Mammary epithelial cell (primary cell): ENCODE measurements at regions of chr11 and their contacts with region 1.

Region 1: DNA sequence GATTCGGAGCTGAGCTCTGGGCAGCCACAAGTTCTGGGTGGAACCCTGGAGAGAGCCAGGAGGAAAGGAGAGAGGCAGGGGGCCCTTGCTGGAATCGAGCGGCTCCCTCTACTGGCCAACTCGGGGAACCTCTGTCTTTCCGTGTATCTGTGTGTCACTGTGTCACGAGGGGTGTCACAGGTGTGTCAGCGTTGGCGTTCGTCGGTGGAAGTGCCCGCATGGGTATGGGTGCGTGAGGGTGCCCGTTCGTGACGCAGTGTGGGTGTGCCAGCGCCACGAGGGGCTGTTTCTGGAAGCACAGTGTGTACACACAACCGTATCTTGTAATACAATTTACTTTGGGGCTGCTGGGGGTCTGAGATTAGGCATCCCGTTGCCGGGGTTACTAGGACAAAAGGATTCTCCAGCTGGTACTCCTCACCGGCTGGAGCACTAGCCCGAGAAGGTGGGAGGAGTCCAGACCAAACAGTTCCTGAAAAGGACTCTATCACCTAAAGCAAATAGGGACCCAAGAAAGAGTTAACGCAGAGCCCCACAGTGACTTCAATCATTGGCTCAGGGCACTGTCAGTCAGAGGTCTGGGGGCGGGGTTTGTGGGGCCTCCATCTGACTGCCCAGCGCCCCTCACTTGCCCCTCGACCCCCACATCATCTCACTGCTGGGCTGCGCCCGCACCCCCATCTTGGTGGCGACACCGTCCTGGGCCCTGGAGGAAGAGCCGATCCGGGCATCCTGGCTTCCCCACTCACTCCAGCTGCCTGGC is 2.6 kb upstream of the BCL9L start:
- DNase-seq: peak; percentile 92
- H3K4me3 ChIP-seq: peak overlapping the region; percentile 77 to 85 (median 79)
- H3K27ac ChIP-seq: peak overlapping the region; percentile 84
- H3K4me1 ChIP-seq: peaks cover 44% of the 10 kb centered on the region
- H3K27me3 ChIP-seq: no peaks in the 10 kb centered on the region
- CTCF ChIP-seq: peak; percentile 94 to 95

Region 2: DNA sequence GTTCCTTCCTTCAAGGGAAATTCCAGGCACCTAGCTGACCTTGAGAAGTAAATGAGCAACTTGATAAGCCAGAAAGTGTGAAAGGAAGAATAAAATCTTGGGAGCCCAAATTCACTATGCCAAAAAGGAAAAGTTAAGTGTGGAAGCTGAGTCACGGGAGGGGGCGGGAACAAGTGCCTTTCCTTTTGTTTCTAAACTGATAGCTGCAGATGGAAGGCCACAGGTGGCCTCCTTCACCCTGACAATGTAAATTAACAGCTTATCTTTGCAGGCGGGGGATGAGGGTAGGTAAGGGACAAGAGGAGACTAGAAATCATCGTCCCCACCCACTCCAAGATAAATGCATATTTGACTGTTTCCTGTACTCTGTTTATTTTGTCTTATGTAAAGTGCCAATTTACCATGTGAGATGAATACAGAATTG is 212.4 kb before region 1 on chr11:
- CTCF ChIA-PET with region 1: no interaction called
- dilution Hi-C with region 1: no loop called
- in situ Hi-C with region 1: no loop called
- intact Hi-C with region 1: no loop called
- DNase-seq: no peak
- H3K4me3 ChIP-seq: no peak overlapping the region
- H3K27ac ChIP-seq: no peak overlapping the region
- H3K4me1 ChIP-seq: no peaks in the 10 kb centered on the region
- H3K27me3 ChIP-seq: no peaks in the 10 kb centered on the region
- CTCF ChIP-seq: no peak

Region 3: DNA sequence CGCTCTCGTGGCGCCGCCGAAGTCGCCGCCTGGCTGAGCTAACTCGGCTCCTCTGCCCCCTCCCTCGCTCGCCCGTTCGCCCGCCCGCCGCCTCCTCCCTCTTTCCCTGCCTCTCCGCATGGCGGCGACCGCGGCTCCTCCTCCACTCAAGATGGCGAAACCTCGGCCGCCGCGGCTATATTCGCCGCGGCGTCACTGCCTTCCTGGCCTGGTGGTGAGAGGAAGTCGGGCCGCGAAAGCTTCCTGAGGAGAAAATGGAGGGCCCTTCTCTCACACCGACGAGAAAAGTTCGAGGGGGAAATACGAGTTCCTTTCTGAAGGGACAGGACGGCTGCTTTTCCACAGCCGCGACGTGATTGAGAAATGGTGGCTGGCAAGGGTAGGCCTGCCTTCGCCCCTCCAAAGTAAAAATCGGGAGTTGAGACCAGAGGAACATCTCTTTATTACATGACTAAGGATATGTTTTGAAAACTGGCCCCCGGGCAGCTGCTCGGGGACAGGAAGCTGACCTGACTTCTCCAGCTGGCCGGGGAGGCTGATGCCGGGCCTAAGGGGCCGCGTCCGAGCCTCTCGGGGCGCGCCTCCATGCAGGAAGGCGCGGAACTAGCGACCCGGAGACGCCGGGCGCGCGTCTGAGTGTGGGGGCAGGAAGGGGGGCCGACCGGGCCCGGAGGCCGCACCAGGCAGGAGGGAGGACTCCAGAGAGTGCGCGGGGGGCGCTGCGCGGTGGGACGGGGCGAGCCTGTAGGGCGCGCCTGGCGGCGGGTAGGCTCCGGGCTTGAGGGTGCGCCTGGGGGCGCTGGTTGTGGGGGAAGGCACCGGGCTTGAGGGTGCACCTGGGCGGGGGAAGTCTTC is 137.0 kb before region 1 on chr11 and contains the start of gene DDX6:
- CTCF ChIA-PET with region 1: interaction called, 3 read pairs
- dilution Hi-C with region 1: no loop called
- in situ Hi-C with region 1: no loop called
- intact Hi-C with region 1: loop called (anchors 1 kb)
- DNase-seq: peak; percentile 81
- H3K4me3 ChIP-seq: peak within 1 kb of the TSS; percentile 90 to 95 (median 95)
- H3K27ac ChIP-seq: peak within 1 kb of the TSS; percentile 93
- H3K4me1 ChIP-seq: peaks cover 18% of the 10 kb centered on the region
- H3K27me3 ChIP-seq: no peaks in the 10 kb centered on the region
- CTCF ChIP-seq: peak in 1 of 2 donors; percentile 54
- total RNA-seq, gene DDX6: 96.8 to 162 TPM

Region 4: GRCh38 chr11:118889781-118890180 is 38.5 kb before region 1 on chr11:
- CTCF ChIA-PET with region 1: interaction called, 4 read pairs
- dilution Hi-C with region 1: no loop called
- in situ Hi-C with region 1: no loop called
- intact Hi-C with region 1: loop called (anchors 5 kb)
- DNase-seq: peak; percentile 37
- H3K4me3 ChIP-seq: no peak overlapping the region
- H3K27ac ChIP-seq: no peak overlapping the region
- H3K4me1 ChIP-seq: peaks cover 19% of the 10 kb centered on the region
- H3K27me3 ChIP-seq: no peaks in the 10 kb centered on the region
- CTCF ChIP-seq: no peak

Region 5: GRCh38 chr11:118907051-118908042 is 20.9 kb before region 1 on chr11:
- CTCF ChIA-PET with region 1: interaction called, 7 read pairs
- dilution Hi-C with region 1: no loop called
- in situ Hi-C with region 1: no loop called
- intact Hi-C with region 1: loop called (anchors 1 kb)
- DNase-seq: peak; percentile 69
- H3K4me3 ChIP-seq: no peak overlapping the region
- H3K27ac ChIP-seq: no peak overlapping the region
- H3K4me1 ChIP-seq: peaks cover 43% of the 10 kb centered on the region
- H3K27me3 ChIP-seq: no peaks in the 10 kb centered on the region
- CTCF ChIP-seq: peak; percentile 88 to 92

Region 6: GRCh38 chr11:118956094-118956846 is 28.0 kb after region 1 on chr11 and contains the start of gene UPK2:
- CTCF ChIA-PET with region 1: no interaction called
- dilution Hi-C with region 1: no loop called
- in situ Hi-C with region 1: no loop called
- intact Hi-C with region 1: loop called (anchors 1 kb)
- DNase-seq: peak; percentile 72
- H3K4me3 ChIP-seq: no peak within 1 kb of the TSS
- H3K27ac ChIP-seq: no peak within 1 kb of the TSS
- H3K4me1 ChIP-seq: peaks cover 2% of the 10 kb centered on the region
- H3K27me3 ChIP-seq: no peaks in the 10 kb centered on the region
- CTCF ChIP-seq: peak; percentile 95 to 98
- total RNA-seq, gene UPK2: 0.45 TPM in 1 of 2 donors, not detected in the other

Region 7: DNA sequence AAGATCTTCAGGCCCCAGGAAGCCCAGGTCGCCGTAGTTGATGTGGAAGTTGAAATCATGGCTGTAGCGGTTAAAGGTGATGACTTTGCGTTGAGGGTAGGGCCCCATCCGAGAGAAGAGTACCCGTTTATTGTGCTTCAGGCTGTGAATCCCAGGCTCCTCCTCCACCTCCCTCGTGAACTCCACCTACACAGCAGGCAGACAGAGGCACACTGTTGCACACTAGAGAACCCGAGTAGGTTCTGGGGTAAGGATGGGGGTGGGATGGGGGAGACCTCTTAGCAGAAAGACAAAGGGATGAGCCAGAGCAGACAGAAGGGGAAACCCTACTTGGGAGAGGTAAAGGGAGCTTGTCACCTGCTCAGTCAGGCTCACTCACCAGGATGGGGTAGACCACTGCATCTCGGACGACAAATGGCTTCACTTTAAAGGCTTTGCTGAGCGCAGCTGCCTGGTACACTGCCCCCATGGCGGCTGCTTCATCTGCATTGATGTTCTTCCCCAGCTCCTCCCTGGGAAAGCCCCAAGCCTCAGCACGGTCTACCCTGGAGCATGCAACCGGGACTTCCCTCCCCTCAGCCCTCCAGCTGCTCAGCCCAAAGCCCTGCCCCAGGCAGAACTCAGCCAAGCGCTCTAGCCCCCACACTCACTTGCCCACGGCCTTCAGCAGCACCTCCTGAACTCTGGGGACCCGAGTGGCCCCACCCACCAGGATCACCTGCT is 123.3 kb after region 1 on chr11:
- CTCF ChIA-PET with region 1: interaction called, 10 read pairs
- dilution Hi-C with region 1: no loop called
- in situ Hi-C with region 1: no loop called
- intact Hi-C with region 1: no loop called
- DNase-seq: no peak
- H3K4me3 ChIP-seq: no peak overlapping the region
- H3K27ac ChIP-seq: no peak overlapping the region
- H3K4me1 ChIP-seq: peaks cover 12% of the 10 kb centered on the region
- H3K27me3 ChIP-seq: no peaks in the 10 kb centered on the region
- CTCF ChIP-seq: no peak

Region 8: GRCh38 chr11:119205574-119206510 is 277.6 kb after region 1 on chr11 and contains the start of gene CBL:
- CTCF ChIA-PET with region 1: no interaction called
- dilution Hi-C with region 1: no loop called
- in situ Hi-C with region 1: no loop called
- intact Hi-C with region 1: loop called (anchors 5 kb)
- DNase-seq: peak; percentile 85
- H3K4me3 ChIP-seq: peak within 1 kb of the TSS; percentile 76 to 97 (median 96)
- H3K27ac ChIP-seq: peak within 1 kb of the TSS; percentile 60
- H3K4me1 ChIP-seq: peaks cover 11% of the 10 kb centered on the region
- H3K27me3 ChIP-seq: no peaks in the 10 kb centered on the region
- CTCF ChIP-seq: peak; percentile 57 to 91
- total RNA-seq, gene CBL: 19.5 to 33.7 TPM